Transverse colon (tissue), 4 donors: ENCODE measurements at regions of chr9 and their contacts with region 1.

Region 1: DNA sequence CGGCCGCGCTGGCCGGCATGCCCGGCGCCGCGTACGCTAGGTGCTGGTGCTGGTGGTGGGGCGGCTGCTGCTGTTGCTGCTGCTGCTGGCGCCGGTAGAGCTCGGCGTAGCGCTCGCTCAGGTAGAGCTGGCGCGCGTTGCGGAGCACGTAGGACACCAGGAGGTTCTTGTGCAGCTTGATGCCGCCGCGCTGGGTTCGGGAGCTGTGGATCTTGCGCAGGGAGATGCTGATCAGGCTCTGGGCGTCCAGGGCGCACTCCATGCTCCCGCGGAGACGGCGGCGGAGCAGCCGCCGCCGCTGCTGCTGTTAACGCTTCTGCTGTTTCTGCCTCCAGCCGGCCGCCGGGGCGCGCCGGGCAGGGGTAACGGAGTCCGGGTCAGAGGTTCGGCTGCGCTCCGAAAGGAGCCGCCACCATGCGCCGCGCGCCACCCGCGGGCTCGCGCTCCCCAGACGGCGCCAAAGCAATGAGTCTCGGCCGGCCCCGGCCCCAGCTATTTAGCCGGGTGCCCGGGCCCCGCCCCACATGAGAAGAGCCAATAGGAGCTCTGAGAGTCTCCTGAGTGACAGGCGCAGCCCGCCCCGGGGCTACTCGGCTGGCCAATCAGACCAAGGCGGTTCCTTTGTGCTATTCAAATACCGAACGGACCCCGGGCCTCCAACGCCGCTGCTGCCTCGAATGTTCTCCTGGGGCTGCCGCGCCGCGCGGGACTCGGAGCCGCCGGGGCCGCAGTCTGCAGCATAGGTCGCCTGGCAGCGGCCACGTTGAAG is at the start of gene IER5L:
- DNase-seq: peak; percentile 96
- H3K4me3 ChIP-seq: peak within 1 kb of the TSS; percentile 58 to 93 (median 91)
- H3K27ac ChIP-seq: peak within 1 kb of the TSS; percentile 93 to 99 (median 96)
- H3K4me1 ChIP-seq: peaks cover 12 to 59% (median 48%) of the 10 kb centered on the region in 4 donors
- H3K27me3 ChIP-seq: no peaks in the 10 kb centered on the region
- CTCF ChIP-seq: peak in 1 of 5 experiments; percentile 16
- EP300 ChIP-seq: no peak
- POLR2A ChIP-seq: peak; percentile 97
- total RNA-seq, gene IER5L: 1.8 to 6.5 (median 5.2) TPM

Region 2: DNA sequence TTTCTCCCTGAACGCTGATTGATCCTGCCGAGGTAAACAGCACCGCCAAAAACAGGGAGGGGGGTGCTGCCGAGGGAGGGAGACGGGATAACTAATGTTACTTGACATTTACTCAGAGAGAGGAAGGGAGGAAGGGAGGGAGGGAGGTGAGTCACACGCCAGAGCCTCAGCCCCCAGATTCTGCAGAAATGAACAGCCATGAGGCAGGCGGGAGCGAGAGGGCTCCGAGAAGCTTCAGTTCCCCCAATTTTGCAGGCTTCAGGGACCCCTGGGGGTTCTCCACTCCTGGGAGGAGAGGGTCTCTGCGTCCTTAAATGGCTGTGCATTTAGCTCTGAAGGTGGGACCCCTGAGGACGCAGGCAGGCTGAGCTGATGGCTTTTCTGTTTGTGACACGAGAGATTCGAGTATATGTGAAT is 59.2 kb after region 1 on chr9:
- in situ Hi-C with region 1: no loop called
- intact Hi-C with region 1: no loop called
- DNase-seq: no peak
- H3K4me3 ChIP-seq: no peak overlapping the region
- H3K27ac ChIP-seq: no peak overlapping the region
- H3K4me1 ChIP-seq: peaks cover 0 to 9% (median 3%) of the 10 kb centered on the region in 4 donors
- H3K27me3 ChIP-seq: peaks cover 16% of the 10 kb centered on the region
- CTCF ChIP-seq: no peak
- EP300 ChIP-seq: no peak
- POLR2A ChIP-seq: no peak

Region 3: DNA sequence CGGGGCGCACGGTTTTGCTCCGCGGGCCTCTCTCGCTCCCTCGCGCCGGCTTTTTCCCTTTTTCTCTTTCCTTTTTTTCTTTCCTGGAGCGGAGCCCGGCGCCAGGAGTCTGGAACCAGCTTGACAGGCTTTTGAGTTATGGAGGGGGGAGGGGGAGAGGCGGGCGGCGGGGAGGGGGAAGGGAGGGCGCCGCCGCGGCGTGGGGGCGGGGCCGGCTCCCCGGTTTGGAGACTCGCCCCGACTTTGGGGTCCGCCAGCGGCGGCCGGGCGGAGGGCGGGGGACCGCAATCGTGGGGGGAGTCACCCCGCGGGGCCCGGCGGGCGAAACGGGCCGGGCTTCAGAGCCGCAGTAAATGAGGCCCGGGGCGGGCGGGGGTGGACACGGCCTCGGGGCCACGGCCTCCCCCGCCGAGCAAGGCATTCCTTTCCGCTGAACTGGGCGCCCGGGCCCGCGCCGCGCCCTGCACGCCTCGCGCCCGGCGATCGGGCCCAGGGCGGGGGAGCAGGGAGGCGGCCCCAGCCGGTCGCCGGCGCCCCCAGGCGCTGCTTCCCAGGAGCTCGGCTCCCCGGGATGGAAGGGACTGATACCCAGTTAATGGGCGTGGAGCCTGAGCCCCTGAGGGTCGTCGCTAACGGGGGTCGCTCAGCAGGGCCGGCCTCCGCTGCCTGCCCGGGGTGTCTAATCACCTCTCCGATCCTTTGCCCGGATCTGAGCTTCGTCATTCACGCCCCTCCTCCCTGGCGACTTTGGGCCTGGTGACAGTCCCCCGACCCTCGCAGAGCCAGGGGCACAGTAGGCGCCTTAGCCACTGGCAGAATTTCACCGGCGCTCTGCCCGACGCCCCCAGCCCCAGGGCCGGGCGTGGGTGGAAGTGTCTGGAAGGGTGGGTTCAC is 304.8 kb after region 1 on chr9:
- in situ Hi-C with region 1: no loop called
- intact Hi-C with region 1: loop called (anchors 10 kb)
- DNase-seq: peak; percentile 85
- H3K4me3 ChIP-seq: peak overlapping the region; percentile 47 to 88 (median 58)
- H3K27ac ChIP-seq: peak overlapping the region; percentile 97 to 100 (median 99)
- H3K4me1 ChIP-seq: peaks cover 47 to 69% (median 49%) of the 10 kb centered on the region in 4 donors
- H3K27me3 ChIP-seq: no peaks in the 10 kb centered on the region
- CTCF ChIP-seq: no peak
- EP300 ChIP-seq: no peak
- POLR2A ChIP-seq: peak; percentile 32

Region 4: DNA sequence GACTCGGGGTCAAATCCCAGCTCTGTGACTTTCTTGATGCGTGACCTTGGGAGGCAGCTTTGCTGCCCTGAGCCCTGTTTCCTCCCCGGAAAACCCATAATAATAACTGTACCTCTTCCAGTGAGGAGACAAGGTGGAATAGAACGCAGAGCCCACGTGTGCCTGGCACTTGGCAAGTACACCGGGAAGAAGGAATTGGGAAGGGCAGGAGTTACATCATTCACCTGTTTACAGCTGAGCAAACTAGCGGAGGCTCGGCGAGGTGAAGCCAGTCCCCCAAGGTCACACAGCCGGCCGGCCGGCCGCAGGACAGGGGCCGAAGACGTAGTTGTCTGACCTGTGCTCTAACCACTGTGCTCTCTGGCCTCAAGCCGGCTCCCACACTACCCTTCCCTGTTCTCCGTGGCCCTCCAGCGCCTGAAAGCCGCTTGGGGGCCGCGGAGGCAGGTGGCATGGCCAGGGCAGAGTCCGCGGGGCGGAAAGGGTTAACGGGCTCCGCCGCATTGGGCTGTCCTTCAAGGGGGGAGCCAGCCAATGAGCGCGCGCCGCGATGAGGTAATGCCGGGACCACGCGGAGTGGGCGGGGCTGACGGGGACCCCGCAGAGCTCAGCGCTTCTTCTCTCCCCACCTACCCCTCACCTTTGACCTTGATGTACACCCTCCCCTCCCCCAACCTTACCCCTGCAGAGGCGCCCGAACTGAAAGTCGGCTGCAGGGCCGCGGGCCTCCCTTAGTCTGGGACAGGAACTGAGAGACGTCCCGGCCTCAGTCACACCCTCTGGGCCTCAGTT is 317.8 kb after region 1 on chr9:
- in situ Hi-C with region 1: loop called in 1 of 4 experiments (anchors 10 kb)
- intact Hi-C with region 1: no loop called
- DNase-seq: peak; percentile 94
- H3K4me3 ChIP-seq: peak overlapping the region; percentile 48 to 53 (median 51)
- H3K27ac ChIP-seq: peak overlapping the region; percentile 92 to 99 (median 96)
- H3K4me1 ChIP-seq: peaks cover 17 to 73% (median 59%) of the 10 kb centered on the region in 4 donors
- H3K27me3 ChIP-seq: no peaks in the 10 kb centered on the region
- CTCF ChIP-seq: peak in 1 of 5 experiments; percentile 10
- EP300 ChIP-seq: peak; percentile 4
- POLR2A ChIP-seq: peak; percentile 83